Activated CD4-positive, alpha-beta T cell treated with anti-CD3 and anti-CD28 coated beads, Interleukin-2, amount 10 ng/mL, durations not matched to agents 7 days and 5 days (primary cell): ENCODE measurements at regions of chr20 and their contacts with region 1.

Region 1: DNA sequence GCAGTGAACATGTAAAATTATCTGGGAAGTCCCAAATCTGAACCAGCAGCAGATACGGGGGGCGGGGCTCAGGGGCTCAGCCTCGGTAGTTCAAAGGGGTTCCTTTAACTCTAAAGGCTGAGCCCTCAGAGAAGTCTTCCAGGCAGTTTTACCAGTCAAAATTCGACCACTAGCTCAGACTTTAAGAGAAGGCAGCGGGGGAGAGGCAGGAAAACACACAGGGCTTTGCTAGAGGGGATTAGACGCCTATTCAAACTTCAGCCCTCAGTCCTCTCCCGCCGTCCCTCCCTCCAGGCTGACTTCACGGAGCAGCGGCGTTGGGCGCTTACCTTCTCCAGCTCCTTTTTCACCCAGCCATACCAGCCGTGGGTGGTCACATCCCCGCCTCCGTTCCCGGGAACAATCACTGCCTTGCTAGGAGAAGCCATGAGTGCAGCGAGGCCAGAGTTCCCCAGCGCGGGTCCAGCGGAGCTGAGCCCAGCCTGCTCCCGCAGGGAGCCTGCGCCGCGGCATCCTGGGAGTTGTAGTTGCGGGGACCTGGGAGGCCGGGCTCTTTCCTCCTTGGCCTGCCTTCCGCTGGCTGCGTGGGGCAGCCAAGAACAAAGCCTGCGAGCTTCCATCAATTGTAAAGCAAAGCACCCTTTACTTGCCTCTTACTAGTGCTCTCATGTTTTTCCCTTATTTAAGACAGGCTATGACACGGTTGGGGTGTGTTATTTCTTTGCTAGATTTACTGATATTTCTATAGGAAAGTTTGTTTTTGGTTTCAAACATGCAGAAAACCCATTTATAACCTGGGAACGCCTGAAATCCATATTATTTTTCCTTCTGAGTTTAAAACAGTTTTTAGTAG is at the start of gene RBBP9:
- DNase-seq: peak; percentile 71
- H3K4me3 Mint-ChIP-seq: peak within 1 kb of the TSS; percentile 88
- H3K27ac Mint-ChIP-seq: peak within 1 kb of the TSS; percentile 85
- H3K4me1 Mint-ChIP-seq: peaks cover 26% of the 10 kb centered on the region
- H3K27me3 Mint-ChIP-seq: no peaks in the 10 kb centered on the region
- total RNA-seq, gene RBBP9: 11.6 to 12.9 TPM

Region 2: DNA sequence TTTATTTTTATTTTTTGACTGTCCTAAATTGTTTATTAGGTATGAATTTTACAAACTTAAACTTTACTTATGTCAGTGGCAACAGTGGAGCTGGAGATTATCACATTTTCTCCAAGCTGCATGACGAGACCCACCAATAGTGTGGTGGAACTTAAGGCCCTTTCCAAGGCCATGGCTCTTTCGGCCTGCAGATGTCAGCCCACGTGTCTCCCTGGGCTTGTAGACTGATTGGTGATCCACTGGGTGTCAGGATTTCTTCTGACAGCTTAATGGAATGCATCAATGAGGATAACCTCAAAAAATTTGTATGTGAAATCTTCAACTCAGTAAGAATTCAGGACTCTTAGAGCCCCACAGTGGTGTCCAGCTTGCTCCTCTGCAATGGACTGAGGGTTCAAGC is 406.9 kb before region 1 on chr20:
- CTCF ChIA-PET with region 1: no interaction called
- POLR2A ChIA-PET with region 1: no interaction called
- DNase-seq: no peak
- H3K4me3 Mint-ChIP-seq: no peak overlapping the region
- H3K27ac Mint-ChIP-seq: no peak overlapping the region
- H3K4me1 Mint-ChIP-seq: no peaks in the 10 kb centered on the region
- H3K27me3 Mint-ChIP-seq: no peaks in the 10 kb centered on the region

Region 3: DNA sequence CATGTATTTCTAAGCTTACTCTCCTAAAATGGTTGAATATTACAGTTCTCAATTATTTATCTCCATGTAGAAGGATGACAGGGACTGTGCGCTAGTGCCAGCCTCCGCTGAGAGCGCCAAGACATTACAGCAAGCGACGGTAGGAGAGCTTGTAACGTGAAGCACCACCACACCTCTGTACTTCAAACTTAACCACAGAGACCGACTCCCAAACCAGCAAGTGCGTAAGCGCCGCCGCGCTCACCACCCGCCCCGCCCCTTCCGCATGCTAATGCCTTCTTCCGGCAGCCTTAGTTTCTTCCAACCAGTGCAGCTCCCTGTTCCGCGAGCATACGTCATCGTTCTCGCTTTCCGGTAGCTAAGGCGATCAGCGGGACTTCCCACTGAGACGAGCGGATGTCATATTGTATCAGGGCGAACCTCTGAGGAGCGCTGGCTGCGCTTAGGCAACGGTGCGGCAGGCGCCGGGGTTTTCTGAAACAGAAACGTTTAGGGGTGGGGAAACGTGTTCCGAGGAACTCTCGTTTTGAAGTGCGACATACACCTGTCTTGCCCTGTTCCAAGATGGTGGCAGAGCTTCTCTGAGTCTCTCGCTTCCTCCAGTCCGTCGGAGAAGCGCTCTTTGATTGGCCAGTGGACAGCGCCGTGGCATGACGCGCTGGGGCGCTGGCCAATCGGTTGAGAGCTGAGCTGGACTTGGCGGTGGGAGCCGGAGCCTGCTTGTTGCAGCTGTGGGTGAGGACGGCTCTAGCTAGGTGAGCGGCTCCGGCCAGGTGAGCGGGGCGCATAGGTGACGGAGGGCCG is 10.5 kb after region 1 on chr20 and contains the start of gene SEC23B:
- CTCF ChIA-PET with region 1: interaction called, 29 read pairs
- POLR2A ChIA-PET with region 1: interaction called, 5 read pairs
- DNase-seq: peak; percentile 98
- H3K4me3 Mint-ChIP-seq: peak within 1 kb of the TSS; percentile 100
- H3K27ac Mint-ChIP-seq: peak within 1 kb of the TSS; percentile 100
- H3K4me1 Mint-ChIP-seq: peaks cover 51% of the 10 kb centered on the region
- H3K27me3 Mint-ChIP-seq: no peaks in the 10 kb centered on the region
- total RNA-seq, gene SEC23B: 65.8 to 69.6 TPM